Pancreas (tissue), 10 donors: ENCODE measurements at regions of chr6 and their contacts with region 1.

Region 1: GRCh38 chr6:136073216-136073615 is 176.9 kb downstream of the MTFR2 start:
- DNase-seq: no peak
- ATAC-seq: no peak
- H3K4me3 ChIP-seq: no peak overlapping the region
- H3K27ac ChIP-seq: no peak overlapping the region
- H3K4me1 ChIP-seq: peaks cover 0 to 10% (median 0%) of the 10 kb centered on the region in 3 donors
- H3K27me3 ChIP-seq: no peaks in the 10 kb centered on the region
- CTCF ChIP-seq: no peak

Region 2: GRCh38 chr6:135722679-135723078 is 350.5 kb before region 1 on chr6:
- intact Hi-C with region 1: no loop called
- DNase-seq: peak in 2 of 6 donors; percentile 29 to 36
- ATAC-seq: peak; percentile 74 to 98 (median 84)
- H3K4me3 ChIP-seq: no peak overlapping the region
- H3K27ac ChIP-seq: peak overlapping the region in 2 of 4 donors; percentile 7 to 18
- H3K4me1 ChIP-seq: peaks cover 0 to 6% (median 0%) of the 10 kb centered on the region in 3 donors
- H3K27me3 ChIP-seq: no peaks in the 10 kb centered on the region
- CTCF ChIP-seq: no peak

Region 3: DNA sequence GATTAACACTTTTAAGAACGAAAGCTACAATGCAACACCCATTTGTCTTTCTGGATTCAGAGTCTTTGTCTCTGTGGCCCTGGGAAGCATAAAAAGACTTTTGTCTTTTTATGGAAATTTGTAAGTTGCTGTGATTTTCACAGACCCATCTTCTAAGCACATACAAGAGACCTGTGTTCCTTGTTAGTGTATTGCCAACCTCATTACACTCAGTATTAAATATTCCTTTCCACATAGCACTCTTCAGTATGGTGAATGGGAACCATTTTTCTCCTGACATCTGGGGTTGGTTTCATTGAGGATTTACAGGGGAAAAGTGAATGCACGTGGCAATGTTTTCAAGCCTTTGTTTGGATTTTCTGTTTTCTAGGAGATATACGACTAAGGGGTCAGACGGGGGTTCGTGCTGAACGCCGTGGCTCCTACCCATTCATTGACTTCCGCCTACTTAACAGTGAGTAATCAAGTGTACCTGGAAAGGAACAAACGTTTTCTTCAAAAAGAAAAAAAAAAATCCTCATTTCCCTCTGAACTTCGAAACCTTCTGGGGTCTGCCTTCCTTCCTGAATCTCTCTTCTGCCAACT is 35.2 kb after region 1 on chr6:
- intact Hi-C with region 1: loop called in 1 of 3 experiments (anchors 5 kb)
- DNase-seq: no peak
- ATAC-seq: no peak
- H3K4me3 ChIP-seq: no peak overlapping the region
- H3K27ac ChIP-seq: no peak overlapping the region
- H3K4me1 ChIP-seq: no peaks in the 10 kb centered on the region
- H3K27me3 ChIP-seq: no peaks in the 10 kb centered on the region
- CTCF ChIP-seq: no peak

Region 4: GRCh38 chr6:136226027-136226673 is 152.9 kb after region 1 on chr6:
- intact Hi-C with region 1: no loop called
- DNase-seq: peak in 4 of 6 donors; percentile 21 to 69 (median 49)
- ATAC-seq: peak; percentile 82 to 98 (median 96)
- H3K4me3 ChIP-seq: peak overlapping the region in 2 of 4 donors; percentile 17 to 27
- H3K27ac ChIP-seq: no peak overlapping the region
- H3K4me1 ChIP-seq: peaks cover 0 to 5% (median 0%) of the 10 kb centered on the region in 3 donors
- H3K27me3 ChIP-seq: no peaks in the 10 kb centered on the region
- CTCF ChIP-seq: peak; percentile 99 to 100 (median 99)